Esophagus muscularis mucosa (tissue), 4 donors: ENCODE measurements at regions of chr1 and their contacts with region 1.

Region 1: GRCh38 chr1:36099681-36100341 is 11.1 kb downstream of the ADPRS start:
- DNase-seq: no peak
- H3K4me3 ChIP-seq: peak overlapping the region in 1 of 4 donors; percentile 7
- H3K27ac ChIP-seq: peak overlapping the region in 1 of 4 donors; percentile 22
- H3K4me1 ChIP-seq: peaks cover 4 to 30% (median 19%) of the 10 kb centered on the region in 4 donors
- H3K27me3 ChIP-seq: no peaks in the 10 kb centered on the region
- CTCF ChIP-seq: peak; percentile 70 to 89 (median 83)
- EP300 ChIP-seq: no peak
- POLR2A ChIP-seq: no peak

Region 2: GRCh38 chr1:35390600-35391494 is 709.0 kb before region 1 on chr1:
- intact Hi-C with region 1: no loop called
- DNase-seq: no peak
- H3K4me3 ChIP-seq: no peak overlapping the region
- H3K27ac ChIP-seq: no peak overlapping the region
- H3K4me1 ChIP-seq: no peaks in the 10 kb centered on the region
- H3K27me3 ChIP-seq: no peaks in the 10 kb centered on the region
- CTCF ChIP-seq: no peak
- EP300 ChIP-seq: no peak
- POLR2A ChIP-seq: no peak

Region 3: DNA sequence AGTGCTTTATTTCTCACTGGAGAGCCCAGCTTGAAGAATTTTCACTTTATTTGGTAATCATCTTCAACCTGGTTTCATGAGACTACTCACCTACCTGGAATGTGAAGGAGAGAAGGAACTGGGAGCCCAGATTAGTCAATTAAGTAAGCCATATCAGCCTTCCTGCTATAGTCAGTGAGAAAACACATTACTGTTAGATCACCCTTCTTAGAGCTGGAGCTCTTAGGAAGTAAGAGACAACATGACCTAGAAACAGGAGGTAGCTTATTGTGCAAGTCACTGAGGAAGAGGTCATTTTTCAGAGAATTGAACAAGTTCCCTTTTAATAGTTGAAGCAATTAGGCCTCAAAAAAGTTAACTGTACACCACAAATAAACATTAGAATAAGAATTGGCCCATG is 65.1 kb before region 1 on chr1:
- intact Hi-C with region 1: no loop called
- DNase-seq: no peak
- H3K4me3 ChIP-seq: no peak overlapping the region
- H3K27ac ChIP-seq: no peak overlapping the region
- H3K4me1 ChIP-seq: no peaks in the 10 kb centered on the region
- H3K27me3 ChIP-seq: no peaks in the 10 kb centered on the region
- CTCF ChIP-seq: no peak
- EP300 ChIP-seq: no peak
- POLR2A ChIP-seq: no peak

Region 4: GRCh38 chr1:36134505-36135329 is 34.9 kb after region 1 on chr1:
- intact Hi-C with region 1: loop called (anchors 2 kb)
- DNase-seq: no peak
- H3K4me3 ChIP-seq: no peak overlapping the region
- H3K27ac ChIP-seq: peak overlapping the region; percentile 68 to 83 (median 74)
- H3K4me1 ChIP-seq: peaks cover 33 to 59% (median 52%) of the 10 kb centered on the region in 4 donors
- H3K27me3 ChIP-seq: no peaks in the 10 kb centered on the region
- CTCF ChIP-seq: peak; percentile 67 to 81 (median 77)
- EP300 ChIP-seq: no peak
- POLR2A ChIP-seq: no peak

Region 5: DNA sequence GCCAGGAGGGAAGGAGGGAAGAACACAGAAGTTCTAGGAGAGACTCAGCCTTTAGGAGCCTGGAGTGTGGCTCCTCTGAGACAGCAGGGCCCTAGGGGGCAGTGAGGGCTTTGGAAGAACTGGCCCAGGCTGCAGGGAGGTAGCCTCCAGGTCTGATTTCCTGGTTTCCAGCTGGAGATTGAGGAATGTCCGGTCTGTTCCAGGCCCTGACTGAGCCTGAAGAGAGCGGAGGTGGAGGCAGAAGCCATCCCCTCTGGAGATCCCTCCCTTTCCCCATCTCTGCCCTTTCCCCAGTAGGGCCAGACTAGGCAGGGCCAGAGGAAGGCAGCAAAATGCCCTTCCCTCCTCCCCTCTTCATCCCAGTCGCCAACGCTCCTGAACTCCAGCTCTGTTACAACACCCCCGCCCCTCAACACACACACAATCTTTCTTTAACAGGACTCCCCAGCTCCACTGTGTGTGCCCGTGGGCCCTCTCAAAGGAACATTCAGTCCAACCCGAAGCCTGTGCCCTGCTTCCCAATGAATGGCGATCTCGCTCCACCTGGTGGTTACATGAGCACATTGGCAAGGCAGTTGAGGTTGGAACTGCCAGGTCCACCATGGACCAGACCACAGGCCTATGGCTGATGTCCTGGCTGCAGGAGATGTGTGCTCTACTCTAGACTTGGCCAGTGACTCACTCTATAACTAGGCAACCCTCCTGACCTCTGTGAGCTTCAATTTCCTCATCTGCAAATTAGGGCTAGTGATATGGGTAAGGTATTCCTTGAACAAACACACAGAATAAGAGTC is 88.2 kb after region 1 on chr1:
- intact Hi-C with region 1: loop called (anchors 5 kb)
- DNase-seq: peak; percentile 97
- H3K4me3 ChIP-seq: no peak overlapping the region
- H3K27ac ChIP-seq: peak overlapping the region; percentile 87 to 90 (median 88)
- H3K4me1 ChIP-seq: peaks cover 11 to 36% (median 27%) of the 10 kb centered on the region in 4 donors
- H3K27me3 ChIP-seq: no peaks in the 10 kb centered on the region
- CTCF ChIP-seq: peak; percentile 90 to 95 (median 93)
- EP300 ChIP-seq: no peak
- POLR2A ChIP-seq: no peak

Region 6: GRCh38 chr1:36285448-36286101 is 185.8 kb after region 1 on chr1:
- intact Hi-C with region 1: loop called (anchors 5 kb)
- DNase-seq: no peak
- H3K4me3 ChIP-seq: no peak overlapping the region
- H3K27ac ChIP-seq: peak overlapping the region; percentile 55 to 71 (median 64)
- H3K4me1 ChIP-seq: peaks cover 32 to 60% (median 60%) of the 10 kb centered on the region in 4 donors
- H3K27me3 ChIP-seq: no peaks in the 10 kb centered on the region
- CTCF ChIP-seq: peak; percentile 73 to 83 (median 80)
- EP300 ChIP-seq: no peak
- POLR2A ChIP-seq: no peak